Panc1 (cell line): ENCODE measurements at regions of chr7 and their contacts with region 1.

Region 1: DNA sequence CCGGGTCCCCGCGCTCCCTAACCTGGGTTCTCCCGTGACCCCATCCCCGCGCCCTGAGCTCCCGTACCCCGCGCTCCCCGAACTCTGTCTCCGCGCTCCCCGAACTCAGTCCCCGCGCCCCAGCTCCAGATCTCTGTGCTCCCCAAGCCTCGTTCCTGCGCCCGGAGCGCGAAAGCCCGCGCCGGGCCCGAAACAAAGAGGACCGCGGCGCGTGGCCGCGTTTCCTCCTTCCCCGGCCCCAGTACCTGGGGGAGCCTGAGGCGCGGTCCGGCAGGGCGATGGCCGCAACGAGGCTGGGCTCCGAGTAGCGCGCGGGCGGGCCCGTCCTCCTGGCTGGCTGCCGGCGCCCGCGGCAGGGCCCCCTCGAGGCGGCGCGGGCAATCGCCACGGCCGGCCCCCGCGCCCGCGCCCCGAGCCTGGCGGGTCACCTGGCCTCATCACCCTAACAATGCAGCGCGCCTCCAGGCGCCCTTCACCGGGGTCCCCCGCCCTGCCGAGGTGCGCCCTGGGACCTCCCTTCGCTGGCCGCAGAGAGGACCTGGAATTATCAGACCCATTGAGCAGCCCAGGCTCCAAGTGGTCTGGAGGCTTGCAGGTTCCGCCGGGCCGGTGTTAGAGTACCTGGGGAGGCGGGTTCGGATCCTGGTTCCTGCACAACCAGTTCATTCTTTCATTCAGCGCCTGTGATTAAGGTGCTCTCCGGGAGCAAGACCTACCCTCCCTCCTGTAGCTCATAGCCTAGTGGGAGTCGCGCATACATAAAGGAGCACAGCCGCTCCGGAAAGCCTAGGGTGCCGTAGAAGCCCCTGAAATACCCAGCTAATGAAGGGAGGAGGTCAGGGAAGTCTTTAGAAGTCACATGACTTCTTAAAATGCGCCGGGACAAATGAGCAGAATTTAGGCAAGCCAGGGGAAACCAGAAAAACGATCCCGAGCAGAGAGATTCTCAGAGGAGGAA is at the start of gene TNS3:
- DNase-seq: no peak
- ATAC-seq: peak; percentile 52
- H3K4me3 ChIP-seq: peak within 1 kb of the TSS; percentile 79 to 92
- H3K27ac ChIP-seq: peak within 1 kb of the TSS; percentile 100
- H3K4me1 ChIP-seq: peaks cover 62% of the 10 kb centered on the region
- H3K27me3 ChIP-seq: no peaks in the 10 kb centered on the region
- CTCF ChIP-seq: peak; percentile 80; the same call in 1 of the 2 replicates
- total RNA-seq, gene TNS3: 533 TPM

Region 2: GRCh38 chr7:47444379-47445057 is 137.6 kb before region 1 on chr7:
- CTCF ChIA-PET with region 1: no interaction called
- POLR2A ChIA-PET with region 1: no interaction called
- in situ Hi-C with region 1: no loop called
- intact Hi-C with region 1: no loop called
- DNase-seq: no peak
- ATAC-seq: no peak
- H3K4me3 ChIP-seq: no peak overlapping the region
- H3K27ac ChIP-seq: peak overlapping the region; percentile 41
- H3K4me1 ChIP-seq: peaks cover 96% of the 10 kb centered on the region
- H3K27me3 ChIP-seq: no peaks in the 10 kb centered on the region
- CTCF ChIP-seq: no peak

Region 3: DNA sequence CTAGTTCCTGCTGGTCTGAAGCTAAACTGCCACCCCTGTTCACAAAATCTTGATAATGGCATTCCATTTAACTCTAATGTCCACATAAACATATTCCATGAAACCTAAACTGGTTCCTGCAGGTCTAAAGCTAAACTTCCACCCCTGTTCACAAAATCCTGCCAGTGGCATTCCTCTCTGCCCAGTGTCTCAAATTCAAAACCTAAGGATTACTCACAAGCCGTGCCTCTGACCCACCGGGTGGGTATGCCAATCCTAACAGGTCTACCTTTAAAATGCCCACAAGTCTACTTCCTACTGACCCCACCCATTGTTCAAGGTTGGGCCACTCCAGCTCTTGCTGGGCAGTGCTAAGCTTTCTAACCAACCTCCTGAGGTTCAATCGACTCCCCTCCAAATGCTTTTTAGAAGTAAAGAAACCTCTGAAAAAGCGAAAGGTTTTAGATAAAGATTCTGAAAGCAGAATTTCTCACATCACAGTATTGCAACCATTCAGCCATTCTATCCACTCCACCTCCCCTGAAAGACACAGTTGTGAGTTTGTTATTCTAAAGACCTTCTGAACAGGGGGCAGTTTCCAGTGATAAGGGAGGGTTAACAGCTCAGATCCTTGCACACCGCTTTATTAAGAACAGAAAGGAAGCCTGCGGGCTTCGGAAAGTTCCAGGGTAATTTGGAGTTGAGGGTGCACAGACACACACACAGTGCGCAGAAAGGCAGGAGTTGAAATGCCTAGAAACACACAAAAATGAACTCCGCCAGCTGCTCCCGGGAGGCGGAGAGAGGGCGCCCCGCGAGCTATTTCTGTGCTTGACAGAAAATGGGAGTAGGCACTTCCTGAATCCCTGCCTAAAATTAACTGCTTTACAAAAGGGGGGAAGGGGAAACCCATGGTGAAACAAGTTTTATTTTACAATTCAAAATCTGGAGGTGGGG is 87.8 kb before region 1 on chr7:
- CTCF ChIA-PET with region 1: no interaction called
- POLR2A ChIA-PET with region 1: interaction called, 10 read pairs
- in situ Hi-C with region 1: no loop called
- intact Hi-C with region 1: no loop called
- DNase-seq: no peak
- ATAC-seq: no peak
- H3K4me3 ChIP-seq: no peak overlapping the region
- H3K27ac ChIP-seq: peak overlapping the region; percentile 91
- H3K4me1 ChIP-seq: peaks cover 98% of the 10 kb centered on the region
- H3K27me3 ChIP-seq: no peaks in the 10 kb centered on the region
- CTCF ChIP-seq: no peak

Region 4: GRCh38 chr7:47625861-47626715 is 44.0 kb after region 1 on chr7:
- CTCF ChIA-PET with region 1: interaction called, 4 read pairs
- POLR2A ChIA-PET with region 1: interaction called, 18 read pairs
- in situ Hi-C with region 1: no loop called
- intact Hi-C with region 1: no loop called
- DNase-seq: no peak
- ATAC-seq: peak; percentile 79
- H3K4me3 ChIP-seq: no peak overlapping the region
- H3K27ac ChIP-seq: peak overlapping the region; percentile 100
- H3K4me1 ChIP-seq: peaks cover 50% of the 10 kb centered on the region
- H3K27me3 ChIP-seq: no peaks in the 10 kb centered on the region
- CTCF ChIP-seq: no peak

Region 5: DNA sequence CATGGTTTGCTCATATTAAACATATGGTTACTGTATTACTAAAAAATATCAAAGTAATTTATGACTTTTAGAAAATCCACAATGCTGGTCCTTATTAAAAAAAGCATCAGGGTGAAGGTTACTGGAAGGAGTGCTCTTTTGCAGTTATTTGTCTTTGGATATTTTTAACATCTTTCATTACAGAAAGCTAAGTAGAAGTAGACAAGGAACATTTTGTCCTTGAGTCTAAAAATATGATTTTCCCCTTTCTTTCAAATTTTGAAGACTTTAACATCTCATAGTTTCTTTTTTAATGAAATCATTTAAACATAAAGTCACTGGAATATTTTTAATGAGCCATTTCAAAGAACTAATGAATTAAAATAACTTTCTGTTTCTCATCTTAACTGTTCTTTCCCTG is 109.9 kb after region 1 on chr7:
- CTCF ChIA-PET with region 1: interaction called, 4 read pairs
- POLR2A ChIA-PET with region 1: interaction called, 19 read pairs
- in situ Hi-C with region 1: no loop called
- intact Hi-C with region 1: no loop called
- DNase-seq: no peak
- ATAC-seq: no peak
- H3K4me3 ChIP-seq: no peak overlapping the region
- H3K27ac ChIP-seq: peak overlapping the region; percentile 84; the same call in 1 of the 2 replicates
- H3K4me1 ChIP-seq: peaks cover 20% of the 10 kb centered on the region
- H3K27me3 ChIP-seq: no peaks in the 10 kb centered on the region
- CTCF ChIP-seq: no peak

Region 6: GRCh38 chr7:47763063-47763974 is 181.2 kb after region 1 on chr7:
- CTCF ChIA-PET with region 1: no interaction called
- POLR2A ChIA-PET with region 1: interaction called, 5 read pairs
- in situ Hi-C with region 1: no loop called
- intact Hi-C with region 1: loop called (anchors 2 kb)
- DNase-seq: peak; percentile 96
- ATAC-seq: peak; percentile 91
- H3K4me3 ChIP-seq: peak overlapping the region in 1 of 2 experiments; percentile 15; a peak in 1 of 4 replicates
- H3K27ac ChIP-seq: peak overlapping the region; percentile 100
- H3K4me1 ChIP-seq: peaks cover 38% of the 10 kb centered on the region
- H3K27me3 ChIP-seq: no peaks in the 10 kb centered on the region
- CTCF ChIP-seq: no peak; the same call in 1 of the 2 replicates